Tibial artery (tissue), 4 donors: ENCODE measurements at regions of chr7 and their contacts with region 1.

Region 1: GRCh38 chr7:55280031-55280454 is 85.1 kb upstream of the LANCL2 start:
- DNase-seq: peak in 1 of 2 donors; percentile 49
- H3K4me3 ChIP-seq: no peak overlapping the region
- H3K27ac ChIP-seq: no peak overlapping the region
- H3K4me1 ChIP-seq: no peaks in the 10 kb centered on the region
- H3K27me3 ChIP-seq: no peaks in the 10 kb centered on the region
- CTCF ChIP-seq: peak; percentile 61 to 65

Region 2: GRCh38 chr7:55409482-55410225 is 129.6 kb after region 1 on chr7:
- intact Hi-C with region 1: loop called (anchors 5 kb)
- DNase-seq: no peak
- H3K4me3 ChIP-seq: no peak overlapping the region
- H3K27ac ChIP-seq: no peak overlapping the region
- H3K4me1 ChIP-seq: no peaks in the 10 kb centered on the region
- H3K27me3 ChIP-seq: no peaks in the 10 kb centered on the region
- CTCF ChIP-seq: no peak

Region 3: GRCh38 chr7:56537952-56538351 is 1257.9 kb after region 1 on chr7:
- intact Hi-C with region 1: no loop called
- DNase-seq: peak in 1 of 2 donors; percentile 70
- H3K4me3 ChIP-seq: peak overlapping the region; percentile 19 to 31
- H3K27ac ChIP-seq: peak overlapping the region in 1 of 2 donors; percentile 28
- H3K4me1 ChIP-seq: no peaks in the 10 kb centered on the region
- H3K27me3 ChIP-seq: no peaks in the 10 kb centered on the region
- CTCF ChIP-seq: no peak